ENCODE measurements at regions of chr17 and their contacts with region 1.

Region 1: GRCh38 chr17:76414334-76415295 is 30.2 kb downstream of the SPHK1 start:
- DNase-seq: peak; percentile 84
- ATAC-seq: peak; percentile 87 to 95

Region 2: GRCh38 chr17:76264755-76265596 is 149.6 kb before region 1 on chr17 and contains the start of gene UBALD2:
- intact Hi-C with region 1: no loop called
- DNase-seq: peak; percentile 100
- ATAC-seq: peak; percentile 96 to 97
- total RNA-seq, gene UBALD2: 21.3 to 30.8 TPM

Region 3: DNA sequence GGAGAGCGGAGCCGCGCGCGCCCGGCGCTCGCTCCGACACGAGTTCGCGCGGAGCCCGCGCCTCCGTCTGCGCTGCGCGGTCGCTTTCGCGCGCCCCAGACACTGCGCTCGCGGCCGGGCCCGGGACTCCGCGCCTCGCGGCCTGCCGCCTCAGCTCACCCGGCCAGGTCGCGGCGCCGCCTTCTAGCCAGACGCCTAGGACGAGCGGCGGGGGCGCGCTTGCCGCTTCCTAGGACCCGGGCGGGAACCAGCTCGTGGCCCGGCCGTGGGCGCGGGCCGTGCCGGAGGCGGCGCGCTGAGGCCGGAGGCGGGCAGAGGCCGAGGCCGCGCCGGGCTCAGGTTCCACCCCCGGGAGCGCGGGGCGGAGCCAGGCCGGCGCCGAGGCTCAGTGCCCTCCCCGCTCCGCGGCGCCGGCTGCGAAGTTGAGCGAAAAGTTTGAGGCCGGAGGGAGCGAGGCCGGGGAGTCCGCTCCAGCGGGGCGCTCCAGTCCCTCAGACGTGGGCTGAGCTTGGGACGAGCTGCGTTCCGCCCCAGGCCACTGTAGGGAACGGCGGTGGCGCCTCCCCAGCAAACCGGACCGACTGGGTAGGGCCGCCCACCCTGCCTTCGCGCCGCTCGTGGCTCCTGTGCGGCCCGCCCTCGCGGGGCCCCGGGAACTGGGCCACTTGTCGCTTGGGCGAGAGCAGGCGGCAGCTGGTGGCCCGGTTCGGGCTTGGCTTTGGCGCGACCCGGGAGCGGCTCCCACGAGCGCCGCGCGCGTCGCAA is 30.2 kb before region 1 on chr17 and contains the start of gene SPHK1:
- intact Hi-C with region 1: no loop called
- DNase-seq: peak; percentile 84
- ATAC-seq: peak; percentile 82
- total RNA-seq, gene SPHK1: 4.8 to 27.9 TPM

Region 4: DNA sequence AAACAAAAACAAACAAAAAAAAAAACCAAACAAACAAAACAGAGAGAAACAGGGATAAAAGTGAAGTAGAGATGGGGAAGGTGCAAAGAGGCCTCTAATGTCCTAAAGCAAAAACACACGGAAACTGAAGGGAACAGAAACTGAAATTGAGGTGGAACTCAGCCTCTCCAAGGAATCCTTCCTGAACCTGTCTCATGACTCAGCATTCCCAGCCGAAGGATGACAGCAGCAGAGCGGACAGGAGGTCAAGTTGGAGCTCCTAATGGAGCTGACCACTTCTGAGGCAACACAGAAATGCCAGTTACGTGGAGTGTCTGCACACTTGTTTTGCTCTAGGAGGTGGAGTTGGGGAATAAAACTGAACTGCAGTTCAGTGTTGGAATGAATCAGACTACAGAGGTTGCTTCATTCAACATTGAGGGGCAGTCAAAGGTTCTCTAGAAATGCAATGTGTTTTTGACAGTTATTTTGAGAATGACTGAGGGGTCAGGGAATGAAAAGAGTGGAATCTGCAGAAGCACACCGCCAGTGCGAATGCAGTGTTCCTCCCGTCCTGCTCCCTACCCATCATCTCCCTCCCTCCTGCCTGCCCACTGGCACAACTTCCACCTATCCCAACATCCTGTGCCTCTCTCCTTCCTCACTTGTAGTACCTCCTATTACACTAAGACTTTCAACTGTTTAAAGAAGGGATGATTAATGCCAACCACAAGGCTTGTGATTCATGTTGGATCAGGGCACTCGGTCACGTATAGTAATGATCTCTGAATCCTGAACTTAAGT is 32.0 kb after region 1 on chr17:
- intact Hi-C with region 1: loop called in 1 of 2 experiments (anchors 5 kb)
- DNase-seq: no peak
- ATAC-seq: peak in 1 of 2 donors; percentile 78

Region 5: GRCh38 chr17:76714822-76715495 is 300.3 kb after region 1 on chr17:
- intact Hi-C with region 1: no loop called
- DNase-seq: peak; percentile 75
- ATAC-seq: peak in 1 of 2 donors; percentile 14

Measured in left cardiac atrium (tissue), 4 donors.